Cardiac septum (tissue), 1 donor: ENCODE measurements at regions of chr17 and their contacts with region 1.

Region 1: GRCh38 chr17:59311130-59311920 is 20.1 kb upstream of the YPEL2 start:
- DNase-seq: no peak

Region 2: GRCh38 chr17:59296771-59297500 is 14.4 kb before region 1 on chr17:
- intact Hi-C with region 1: no loop called
- DNase-seq: no peak

Region 3: DNA sequence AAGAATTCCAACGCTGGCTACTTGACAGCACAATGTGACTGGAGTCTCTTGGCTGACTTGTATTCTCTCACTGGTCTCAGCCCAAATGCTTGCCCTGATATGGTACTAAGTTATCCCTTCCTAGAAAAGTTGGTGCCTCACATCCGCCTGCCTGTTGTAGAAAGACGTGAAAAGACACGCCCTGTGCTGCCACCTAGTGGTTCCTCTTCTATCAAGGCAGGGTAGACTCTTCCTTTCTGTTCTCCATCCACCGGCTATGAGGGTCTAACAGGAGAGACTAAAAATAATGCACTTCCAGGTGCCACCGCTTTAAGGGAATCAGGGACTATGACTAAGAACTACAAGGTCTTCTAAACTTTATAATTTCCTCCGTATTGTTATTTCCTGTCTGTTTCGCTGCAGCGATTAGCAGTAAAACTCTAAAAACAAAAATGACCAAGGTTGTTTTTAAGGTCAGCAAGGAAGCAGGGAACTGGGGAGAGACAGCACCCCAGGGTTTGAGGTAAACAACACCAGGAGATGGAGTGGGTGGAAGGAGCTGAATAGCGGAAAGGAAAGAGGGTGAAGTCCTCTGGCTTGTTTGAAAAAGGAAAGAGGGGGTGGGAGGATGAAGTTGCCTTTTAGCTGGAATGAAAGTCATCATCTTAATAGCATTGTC is 129.6 kb after region 1 on chr17:
- intact Hi-C with region 1: loop called (anchors 1 kb)
- DNase-seq: peak; percentile 93

Region 4: DNA sequence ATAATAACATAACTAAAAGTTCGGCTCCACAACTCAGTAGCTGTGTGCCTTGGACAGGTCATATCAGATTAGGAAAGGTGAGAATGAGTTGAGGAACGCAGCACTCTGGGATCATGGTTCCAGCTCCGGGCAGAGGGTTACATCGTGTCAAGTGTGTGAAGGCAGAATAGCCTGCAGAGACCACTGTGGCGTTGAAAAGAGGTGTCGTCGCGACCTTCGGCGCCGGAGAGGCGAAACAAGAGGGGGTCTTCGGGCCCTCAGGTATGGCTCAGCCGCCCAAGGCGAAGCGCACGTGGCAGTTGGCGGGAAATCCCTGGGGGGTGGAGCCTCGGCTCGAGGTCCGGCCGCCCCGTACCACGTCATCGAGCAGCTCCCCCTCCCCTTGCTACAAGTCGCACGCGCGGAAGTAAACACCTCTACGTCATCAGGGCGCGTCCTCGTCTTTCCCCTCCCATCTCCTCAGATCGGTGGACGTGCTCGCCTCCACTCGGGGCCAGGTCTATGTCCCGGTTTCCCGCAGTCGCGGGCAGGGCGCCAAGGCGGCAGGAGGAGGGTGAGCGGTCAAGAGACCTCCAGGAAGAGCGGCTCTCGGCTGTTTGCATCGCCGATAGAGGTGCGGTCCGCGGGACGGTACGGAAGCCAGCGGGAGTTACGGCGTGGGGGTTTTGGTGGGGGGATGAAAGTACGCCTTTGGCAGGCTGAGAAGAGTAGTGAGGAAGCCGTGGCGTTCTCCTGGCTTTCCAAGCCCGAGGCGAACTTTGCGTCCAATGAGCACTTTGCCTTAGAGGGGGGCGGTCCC is 254.0 kb after region 1 on chr17 and contains the start of gene DHX40:
- intact Hi-C with region 1: loop called (anchors 5 kb)
- DNase-seq: peak; percentile 98
- total RNA-seq, gene DHX40: 18.2 TPM